Heart left ventricle (tissue), 16 donors: ENCODE measurements at regions of chr2 and their contacts with region 1.

Region 1: DNA sequence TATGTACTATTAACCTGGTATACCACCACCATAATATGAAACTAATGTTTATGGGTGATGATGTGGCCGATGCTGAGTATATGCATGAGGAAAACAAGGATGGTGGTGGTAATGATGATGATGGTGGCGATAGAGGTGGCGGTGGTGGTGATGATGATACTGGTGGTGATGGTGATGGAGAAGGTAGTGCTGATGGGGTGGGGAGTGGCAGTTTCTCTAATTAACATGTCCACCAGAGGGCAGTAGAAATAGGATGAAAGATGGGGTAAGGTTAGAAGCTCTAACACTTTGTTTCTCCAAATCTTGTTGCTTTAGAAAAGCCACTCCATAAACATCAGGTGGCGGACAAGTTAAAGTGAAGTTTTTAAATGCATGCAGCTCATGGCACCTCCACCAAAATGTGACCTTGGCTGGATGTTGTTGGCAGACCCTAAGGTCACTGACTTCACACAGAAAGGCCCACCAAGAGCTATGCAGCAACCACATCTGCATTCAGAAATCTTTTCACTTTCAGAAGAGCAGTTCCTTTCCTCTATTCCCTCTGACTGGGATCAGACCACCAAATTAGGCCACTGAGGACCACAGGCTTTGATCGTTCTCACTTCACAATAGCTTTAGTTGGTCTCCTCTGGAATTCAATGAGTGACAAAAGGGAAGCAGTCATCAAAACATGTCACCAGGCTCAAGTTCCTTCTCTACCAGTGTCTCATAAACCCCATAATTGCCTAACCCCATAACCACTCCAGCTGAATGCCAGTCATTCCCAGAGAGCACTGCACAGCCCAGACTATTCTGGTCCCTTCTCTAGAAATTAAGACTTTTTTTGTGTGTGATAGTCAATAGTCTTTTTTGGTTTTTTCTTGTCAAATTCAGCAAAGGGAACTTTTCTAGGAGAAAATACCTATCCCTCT is 7.5 kb upstream of the BCL11A start:
- DNase-seq: no peak
- ATAC-seq: peak in 2 of 4 donors; percentile 50 to 64
- H3K4me3 ChIP-seq: no peak overlapping the region
- H3K27ac ChIP-seq: no peak overlapping the region
- H3K4me1 ChIP-seq: peaks cover 0 to 16% (median 0%) of the 10 kb centered on the region in 12 donors
- H3K27me3 ChIP-seq: peaks cover 0 to 77% (median 18%) of the 10 kb centered on the region in 9 donors
- CTCF ChIP-seq: peak; percentile 26 to 53 (median 37)
- POLR2A ChIP-seq: no peak

Region 2: GRCh38 chr2:58571181-58571852 is 1989.7 kb before region 1 on chr2:
- intact Hi-C with region 1: loop called in 1 of 10 experiments (anchors 10 kb)
- DNase-seq: peak in 1 of 5 donors; percentile 5
- ATAC-seq: peak in 2 of 4 donors; percentile 52 to 58
- H3K4me3 ChIP-seq: no peak overlapping the region
- H3K27ac ChIP-seq: no peak overlapping the region
- H3K4me1 ChIP-seq: no peaks in the 10 kb centered on the region
- H3K27me3 ChIP-seq: peaks cover 0 to 7% (median 0%) of the 10 kb centered on the region in 9 donors
- CTCF ChIP-seq: peak in 11 of 12 donors; percentile 13 to 54 (median 33)
- POLR2A ChIP-seq: no peak

Region 3: GRCh38 chr2:58762176-58762781 is 1798.7 kb before region 1 on chr2:
- intact Hi-C with region 1: loop called in 1 of 10 experiments (anchors 10 kb)
- DNase-seq: peak in 2 of 5 donors; percentile 9 to 29
- ATAC-seq: peak in 2 of 4 donors; percentile 53 to 66
- H3K4me3 ChIP-seq: no peak overlapping the region
- H3K27ac ChIP-seq: no peak overlapping the region
- H3K4me1 ChIP-seq: no peaks in the 10 kb centered on the region
- H3K27me3 ChIP-seq: peaks cover 0 to 10% (median 0%) of the 10 kb centered on the region in 9 donors
- CTCF ChIP-seq: peak; percentile 29 to 60 (median 46)
- POLR2A ChIP-seq: no peak

Region 4: GRCh38 chr2:60659026-60659425 is 98.0 kb after region 1 on chr2:
- intact Hi-C with region 1: no loop called
- DNase-seq: no peak
- ATAC-seq: no peak
- H3K4me3 ChIP-seq: no peak overlapping the region
- H3K27ac ChIP-seq: no peak overlapping the region
- H3K4me1 ChIP-seq: peaks cover 0 to 19% (median 0%) of the 10 kb centered on the region in 12 donors
- H3K27me3 ChIP-seq: peaks cover 0 to 2% (median 0%) of the 10 kb centered on the region in 9 donors
- CTCF ChIP-seq: no peak
- POLR2A ChIP-seq: no peak

Region 5: DNA sequence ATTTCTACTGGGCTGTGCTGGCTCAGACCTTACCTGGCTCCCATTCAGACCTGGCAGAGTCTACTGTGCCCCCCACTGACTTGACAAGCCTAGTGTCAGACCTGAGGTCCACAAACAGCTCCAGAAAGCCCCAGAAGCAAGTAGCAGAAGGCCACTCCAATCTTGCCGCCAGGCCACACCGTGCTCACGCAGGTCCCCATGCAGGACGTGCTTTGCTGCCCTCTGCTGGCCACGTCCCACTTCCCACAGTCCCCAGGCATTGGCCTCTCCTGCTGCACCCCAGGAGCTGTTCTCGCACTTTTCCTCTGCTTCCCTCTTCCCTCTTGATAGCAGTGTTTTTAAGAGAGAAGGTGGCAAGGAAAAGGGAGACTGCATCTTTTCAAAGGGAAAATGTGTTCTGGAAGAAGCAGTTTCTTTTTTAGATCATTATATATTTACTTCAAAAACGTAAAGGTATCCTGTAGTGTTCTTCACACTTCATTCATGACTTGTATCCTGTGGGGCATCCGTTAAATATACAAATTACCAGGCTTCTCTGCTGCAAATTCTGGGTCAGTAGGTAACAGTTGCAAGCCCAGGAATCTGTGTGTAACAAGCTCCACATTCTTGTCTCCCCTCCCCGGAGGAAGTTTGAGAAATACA is 113.7 kb after region 1 on chr2:
- intact Hi-C with region 1: loop called in 1 of 10 experiments (anchors 5 kb)
- DNase-seq: peak; percentile 75 to 91 (median 84)
- ATAC-seq: peak; percentile 89 to 95 (median 94)
- H3K4me3 ChIP-seq: no peak overlapping the region
- H3K27ac ChIP-seq: no peak overlapping the region
- H3K4me1 ChIP-seq: peaks cover 0 to 7% (median 0%) of the 10 kb centered on the region in 12 donors
- H3K27me3 ChIP-seq: peaks cover 0 to 5% (median 0%) of the 10 kb centered on the region in 9 donors
- CTCF ChIP-seq: peak; percentile 83 to 94 (median 87)
- POLR2A ChIP-seq: no peak